Lower leg skin (tissue), 4 donors: ENCODE measurements at regions of chr12 and their contacts with region 1.

Region 1: GRCh38 chr12:47742253-47742825 is 16.3 kb downstream of the RAPGEF3 start:
- DNase-seq: peak; percentile 49 to 94
- H3K4me3 ChIP-seq: no peak overlapping the region
- CTCF ChIP-seq: peak in 1 of 3 donors; percentile 75
- POLR2A ChIP-seq: no peak

Region 2: GRCh38 chr12:46886541-46887041 is 855.7 kb before region 1 on chr12:
- intact Hi-C with region 1: no loop called
- DNase-seq: no peak
- H3K4me3 ChIP-seq: no peak overlapping the region
- CTCF ChIP-seq: no peak
- POLR2A ChIP-seq: no peak

Region 3: DNA sequence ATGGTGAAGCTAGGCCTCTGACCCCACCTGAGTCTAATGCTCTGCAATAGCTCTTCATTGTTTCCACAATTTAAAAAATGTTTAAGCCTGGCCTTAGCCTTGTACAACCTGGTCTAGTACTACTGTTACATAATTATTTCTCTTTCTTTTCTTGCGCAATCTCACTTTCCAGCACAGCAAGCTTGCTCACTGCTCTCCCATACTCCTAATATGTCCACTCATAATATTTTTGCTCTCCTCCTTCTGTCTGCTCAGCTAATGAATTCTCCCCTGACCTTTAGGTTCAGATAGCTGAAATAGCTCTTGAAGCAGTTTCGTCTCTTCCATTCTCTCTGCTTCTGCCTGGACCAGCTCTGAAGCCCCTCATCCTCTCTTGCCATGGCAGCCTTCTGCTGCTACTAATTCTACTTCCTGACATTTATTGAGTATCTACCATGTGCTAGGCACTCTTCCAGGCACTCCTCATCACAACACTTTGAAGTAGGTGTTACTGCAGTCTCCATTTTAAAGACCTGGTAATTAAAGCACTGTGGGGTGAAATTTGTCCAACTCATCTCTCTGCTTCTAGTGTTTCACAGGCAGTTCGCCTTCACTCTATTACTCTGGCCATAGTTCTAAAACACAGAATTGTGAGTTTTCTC is 27.9 kb after region 1 on chr12:
- intact Hi-C with region 1: loop called (anchors 2 kb)
- DNase-seq: no peak
- H3K4me3 ChIP-seq: no peak overlapping the region
- CTCF ChIP-seq: no peak
- POLR2A ChIP-seq: no peak